AG04449 (cell line): ENCODE measurements at regions of chr15 and their contacts with region 1.

Region 1: GRCh38 chr15:62241135-62241770 is 76.2 kb upstream of the C2CD4B start:
- DNase-seq: no peak
- H3K4me3 ChIP-seq: no peak overlapping the region
- CTCF ChIP-seq: peak; percentile 32

Region 2: DNA sequence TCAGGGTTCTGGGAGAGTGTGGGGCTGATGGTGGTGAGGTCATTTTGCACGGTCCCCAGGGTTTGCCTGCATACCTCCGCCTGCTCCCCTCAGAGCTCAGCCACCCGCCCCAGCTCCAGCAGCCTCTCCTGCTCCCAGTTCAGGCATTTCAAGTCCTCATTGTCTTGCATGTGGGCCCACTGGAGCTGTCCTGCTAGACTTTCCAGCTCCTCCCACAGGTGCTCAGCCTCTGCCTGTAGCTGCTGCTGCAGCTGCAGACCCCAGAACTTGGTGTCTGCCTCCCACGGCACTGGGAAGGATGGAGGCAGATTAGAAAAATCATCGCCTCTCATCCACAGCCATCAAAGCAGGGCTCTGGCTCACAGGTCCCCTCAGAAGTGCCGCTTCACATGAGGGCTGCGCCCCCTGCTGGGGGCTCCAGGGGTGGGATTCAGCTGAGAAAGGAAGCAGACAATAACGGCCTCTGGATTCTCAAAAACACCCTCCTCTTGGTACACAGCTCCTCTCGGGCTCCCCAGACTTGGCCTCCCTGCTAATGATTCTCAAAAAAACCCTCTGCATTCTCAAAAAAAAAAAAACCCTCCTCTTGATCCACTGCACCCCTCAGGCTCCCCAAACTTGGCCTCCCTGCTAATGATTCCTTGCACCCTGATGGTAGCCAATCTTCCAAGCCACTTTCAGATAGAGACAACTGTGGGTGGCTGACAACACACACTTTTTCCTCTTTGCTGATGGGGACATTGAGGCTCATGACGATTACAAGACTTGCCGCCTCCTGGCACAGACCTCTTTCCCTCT is 13.1 kb after region 1 on chr15:
- CTCF ChIA-PET with region 1: interaction called, 19 read pairs
- POLR2A ChIA-PET with region 1: no interaction called
- DNase-seq: no peak
- H3K4me3 ChIP-seq: no peak overlapping the region
- CTCF ChIP-seq: peak; percentile 84

Region 3: DNA sequence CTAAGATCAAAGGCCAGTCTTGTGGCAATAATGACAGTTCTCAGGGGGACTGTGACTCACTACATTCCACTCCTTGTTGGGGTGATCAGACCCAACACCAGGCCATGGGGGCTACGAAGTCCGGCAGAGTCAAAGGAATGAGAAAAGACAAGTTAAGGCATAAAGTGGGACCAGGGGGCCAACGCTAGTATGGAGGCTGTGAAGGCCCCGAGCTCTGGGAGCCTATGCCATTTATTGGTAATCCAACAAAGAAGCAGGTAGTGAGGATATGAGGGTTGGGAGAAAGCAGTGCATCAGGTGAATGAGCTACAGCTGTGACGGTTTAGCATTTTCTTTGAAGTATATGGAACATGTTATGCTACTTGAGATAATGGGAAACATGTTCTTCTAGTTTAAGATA is 28.3 kb after region 1 on chr15:
- CTCF ChIA-PET with region 1: no interaction called
- POLR2A ChIA-PET with region 1: no interaction called
- DNase-seq: no peak
- H3K4me3 ChIP-seq: no peak overlapping the region
- CTCF ChIP-seq: no peak